Activated naive CD4-positive, alpha-beta T cell treated with anti-CD3 and anti-CD28 coated beads for 36 hours (primary cell): ENCODE measurements at regions of chr7 and their contacts with region 1.

Region 1: DNA sequence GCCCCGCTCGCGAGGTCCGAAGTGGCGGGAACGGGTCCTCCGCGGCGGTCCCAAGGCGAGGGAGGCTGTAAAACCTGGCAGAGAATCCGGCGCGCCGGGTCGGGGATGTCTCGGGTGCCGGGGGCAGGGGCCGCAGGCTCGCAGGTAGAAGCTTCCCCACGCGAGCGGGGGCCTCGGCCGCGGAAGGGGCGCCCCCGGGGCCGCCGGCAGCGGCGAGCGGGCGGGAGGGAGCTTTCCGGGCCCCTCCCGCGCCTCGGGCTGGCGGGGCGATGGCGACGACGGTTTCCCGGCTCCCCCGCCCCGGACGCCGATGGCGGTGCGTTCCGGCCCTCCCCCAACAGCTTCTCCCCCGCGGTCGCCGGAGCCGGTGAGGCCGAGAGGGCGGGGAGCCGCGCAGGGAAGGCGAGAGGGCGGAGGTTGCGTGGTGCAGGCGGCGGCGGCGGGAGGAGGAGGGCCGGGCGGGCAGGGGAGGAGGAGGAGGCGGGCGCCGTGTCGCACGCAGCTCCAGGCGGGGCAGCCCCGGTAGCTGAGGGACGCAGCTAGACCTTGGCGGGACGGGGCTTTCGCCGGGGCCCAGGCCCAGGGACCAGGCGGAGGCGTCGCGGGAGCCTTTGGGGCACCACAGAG is at the start of gene CUL1:
- DNase-seq: peak; percentile 89
- H3K4me3 Mint-ChIP-seq: peak within 1 kb of the TSS; percentile 86
- H3K27ac Mint-ChIP-seq: peak within 1 kb of the TSS; percentile 97
- H3K4me1 Mint-ChIP-seq: peaks cover 53% of the 10 kb centered on the region
- H3K27me3 Mint-ChIP-seq: no peaks in the 10 kb centered on the region
- total RNA-seq, gene CUL1: 59.6 to 62.2 TPM

Region 2: DNA sequence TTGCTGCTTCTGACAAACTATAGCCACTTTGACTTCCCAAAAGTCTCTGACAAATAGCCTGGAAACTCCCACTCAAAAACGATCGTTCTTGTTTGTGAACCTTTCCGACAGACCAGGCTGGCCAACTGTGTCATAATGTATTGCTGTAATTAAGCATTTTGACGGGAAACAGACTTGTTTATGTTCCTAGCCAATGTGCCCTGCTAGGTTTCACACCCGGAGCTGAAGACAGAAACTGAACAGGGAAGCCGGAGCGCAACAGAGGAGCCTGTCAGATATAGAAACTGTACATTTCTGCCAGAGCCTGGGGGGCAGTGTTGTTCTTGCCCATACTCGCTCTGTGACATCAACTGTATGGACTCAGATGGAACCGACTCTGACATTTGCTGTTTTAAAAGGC is 163.3 kb before region 1 on chr7:
- CTCF ChIA-PET with region 1: no interaction called
- intact Hi-C with region 1: loop called (anchors 1 kb)
- DNase-seq: peak; percentile 79
- H3K4me3 Mint-ChIP-seq: peak overlapping the region; percentile 69
- H3K27ac Mint-ChIP-seq: peak overlapping the region; percentile 76
- H3K4me1 Mint-ChIP-seq: peaks cover 10% of the 10 kb centered on the region
- H3K27me3 Mint-ChIP-seq: peaks cover 10% of the 10 kb centered on the region

Region 3: GRCh38 chr7:148584154-148584827 is 114.2 kb before region 1 on chr7:
- CTCF ChIA-PET with region 1: interaction called, 3 read pairs
- intact Hi-C with region 1: loop called (anchors 1 kb)
- DNase-seq: peak; percentile 42
- H3K4me3 Mint-ChIP-seq: no peak overlapping the region
- H3K27ac Mint-ChIP-seq: no peak overlapping the region
- H3K4me1 Mint-ChIP-seq: peaks cover 17% of the 10 kb centered on the region
- H3K27me3 Mint-ChIP-seq: no peaks in the 10 kb centered on the region

Region 4: GRCh38 chr7:148727501-148728278 is 29.2 kb after region 1 on chr7:
- CTCF ChIA-PET with region 1: interaction called, 7 read pairs
- intact Hi-C with region 1: loop called (anchors 1 kb)
- DNase-seq: peak; percentile 83
- H3K4me3 Mint-ChIP-seq: no peak overlapping the region
- H3K27ac Mint-ChIP-seq: peak overlapping the region; percentile 64
- H3K4me1 Mint-ChIP-seq: peaks cover 66% of the 10 kb centered on the region
- H3K27me3 Mint-ChIP-seq: no peaks in the 10 kb centered on the region

Region 5: GRCh38 chr7:148914208-148914777 is 215.8 kb after region 1 on chr7:
- CTCF ChIA-PET with region 1: interaction called, 4 read pairs
- intact Hi-C with region 1: loop called (anchors 1 kb)
- DNase-seq: peak; percentile 75
- H3K4me3 Mint-ChIP-seq: peak overlapping the region; percentile 61
- H3K27ac Mint-ChIP-seq: peak overlapping the region; percentile 96
- H3K4me1 Mint-ChIP-seq: peaks cover 71% of the 10 kb centered on the region
- H3K27me3 Mint-ChIP-seq: no peaks in the 10 kb centered on the region

Region 6: DNA sequence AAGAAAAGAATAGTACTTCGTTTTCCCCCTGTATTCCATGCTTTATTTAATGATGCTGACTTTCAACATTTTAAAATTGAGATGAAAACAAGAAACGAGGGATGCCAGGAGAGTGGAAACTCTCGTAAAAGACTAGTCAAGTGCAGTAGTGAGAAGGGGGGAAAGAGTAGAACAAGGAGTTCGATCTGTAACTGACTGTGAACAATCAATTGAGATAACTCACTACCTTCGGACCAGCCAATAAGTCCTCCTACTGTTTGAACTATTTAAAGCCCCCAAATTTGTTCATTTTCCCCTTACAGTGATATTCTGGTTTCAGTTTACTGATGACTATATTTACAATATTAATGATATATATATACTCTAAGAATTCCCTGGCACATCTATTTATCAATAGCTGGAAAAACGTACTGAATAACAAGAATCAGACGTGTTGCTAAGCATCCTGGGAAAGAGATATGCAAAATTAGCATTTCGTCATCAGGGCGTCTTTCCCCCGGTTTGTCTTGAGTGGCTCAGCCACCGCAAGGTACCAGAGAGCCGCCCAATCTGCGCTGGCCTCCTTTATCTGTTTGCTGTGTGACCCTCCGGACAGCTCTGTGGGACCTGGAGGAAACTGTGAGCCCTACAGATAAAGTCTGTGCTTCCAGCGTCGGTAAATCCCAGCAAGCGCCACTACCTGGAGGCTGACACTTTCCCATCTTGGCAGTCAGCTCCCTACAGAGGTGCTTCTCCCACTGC is 288.7 kb after region 1 on chr7:
- CTCF ChIA-PET with region 1: no interaction called
- intact Hi-C with region 1: loop called (anchors 2 kb)
- DNase-seq: peak; percentile 88
- H3K4me3 Mint-ChIP-seq: peak overlapping the region; percentile 98
- H3K27ac Mint-ChIP-seq: peak overlapping the region; percentile 93
- H3K4me1 Mint-ChIP-seq: peaks cover 40% of the 10 kb centered on the region
- H3K27me3 Mint-ChIP-seq: peaks cover 7% of the 10 kb centered on the region

Region 7: GRCh38 chr7:149125863-149126661 is 427.6 kb after region 1 on chr7 and contains the start of gene ZNF425:
- CTCF ChIA-PET with region 1: no interaction called
- intact Hi-C with region 1: loop called (anchors 2 kb)
- DNase-seq: peak; percentile 91
- H3K4me3 Mint-ChIP-seq: peak within 1 kb of the TSS; percentile 98
- H3K27ac Mint-ChIP-seq: peak within 1 kb of the TSS; percentile 99
- H3K4me1 Mint-ChIP-seq: peaks cover 22% of the 10 kb centered on the region
- H3K27me3 Mint-ChIP-seq: no peaks in the 10 kb centered on the region
- total RNA-seq, gene ZNF425: 0.57 TPM